Activated B cell treated with CpG ODN at 0.5 μM for 24 hours (primary cell): ENCODE measurements at regions of chr3 and their contacts with region 1.

Region 1: GRCh38 chr3:58305882-58306711 is at the starts of genes HTD2 and RPP14:
- DNase-seq: peak; percentile 97
- ATAC-seq: peak; percentile 88
- H3K4me3 Mint-ChIP-seq: peak within 1 kb of the TSS; percentile 98
- H3K27ac Mint-ChIP-seq: peak within 1 kb of the TSS; percentile 99
- H3K4me1 Mint-ChIP-seq: peaks cover 29% of the 10 kb centered on the region
- H3K27me3 Mint-ChIP-seq: peaks cover 3% of the 10 kb centered on the region
- CTCF ChIP-seq: no peak
- total RNA-seq, gene HTD2: 11.4 TPM in 2 replicates
- total RNA-seq, gene RPP14: 17.5 and 17.7 TPM in 2 replicates

Region 2: GRCh38 chr3:57755668-57756527 is 550.2 kb before region 1 on chr3 and contains the start of gene SLMAP:
- CTCF ChIA-PET with region 1: no interaction called
- POLR2A ChIA-PET with region 1: no interaction called
- intact Hi-C with region 1: loop called (anchors 5 kb)
- DNase-seq: peak; percentile 87
- ATAC-seq: peak; percentile 94
- H3K4me3 Mint-ChIP-seq: peak within 1 kb of the TSS; percentile 95
- H3K27ac Mint-ChIP-seq: peak within 1 kb of the TSS; percentile 94
- H3K4me1 Mint-ChIP-seq: peaks cover 39% of the 10 kb centered on the region
- H3K27me3 Mint-ChIP-seq: no peaks in the 10 kb centered on the region
- CTCF ChIP-seq: no peak
- total RNA-seq, gene SLMAP: 45.4 and 57.1 TPM in 2 replicates

Region 3: GRCh38 chr3:58188173-58188564 is 117.9 kb before region 1 on chr3:
- CTCF ChIA-PET with region 1: interaction called, 167 read pairs
- POLR2A ChIA-PET with region 1: interaction called, 23 read pairs
- intact Hi-C with region 1: no loop called
- DNase-seq: no peak
- ATAC-seq: peak; percentile 18
- H3K4me3 Mint-ChIP-seq: no peak overlapping the region
- H3K27ac Mint-ChIP-seq: peak overlapping the region; percentile 61
- H3K4me1 Mint-ChIP-seq: peaks cover 7% of the 10 kb centered on the region
- H3K27me3 Mint-ChIP-seq: no peaks in the 10 kb centered on the region
- CTCF ChIP-seq: no peak

Region 4: DNA sequence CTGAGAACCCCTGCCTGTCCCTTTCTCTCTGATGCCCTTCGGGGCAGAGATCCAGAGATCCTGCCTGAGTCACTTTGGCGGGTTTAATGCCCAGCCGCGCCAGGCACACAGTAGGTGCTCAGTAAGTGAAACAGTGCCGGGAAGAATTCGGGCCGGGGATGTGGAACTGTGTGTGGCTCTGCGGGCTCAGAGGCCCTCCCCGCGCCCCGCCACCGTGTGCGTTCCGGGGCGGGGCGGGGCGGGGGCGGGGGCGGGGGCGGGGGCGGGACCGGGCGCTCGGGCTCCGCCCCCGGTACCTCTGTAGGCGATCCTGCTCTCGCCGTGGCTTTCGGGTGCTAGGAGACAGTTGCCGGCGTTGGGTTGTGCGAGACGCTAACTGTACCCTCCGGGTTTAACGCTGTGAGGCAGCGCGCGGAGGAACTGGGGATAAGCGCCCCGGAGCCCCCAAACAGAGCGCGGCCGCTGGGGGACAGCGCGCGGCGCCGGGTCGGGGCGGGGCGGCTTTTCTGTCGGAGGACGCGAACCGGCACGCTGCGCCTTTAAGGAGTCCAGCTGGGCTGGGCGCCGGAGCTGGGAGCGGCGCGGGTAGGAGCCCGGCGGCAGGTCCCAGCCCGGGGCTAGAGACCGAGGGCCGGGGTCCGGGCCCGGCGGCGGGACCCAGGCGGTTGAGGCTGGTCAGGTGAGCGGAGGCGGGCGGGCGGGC is 68.7 kb before region 1 on chr3 and contains the start of gene ABHD6:
- CTCF ChIA-PET with region 1: interaction called, 8 read pairs
- POLR2A ChIA-PET with region 1: interaction called, 26 read pairs
- intact Hi-C with region 1: loop called (anchors 1 kb)
- DNase-seq: peak; percentile 86
- ATAC-seq: peak; percentile 67
- H3K4me3 Mint-ChIP-seq: peak within 1 kb of the TSS; percentile 91
- H3K27ac Mint-ChIP-seq: peak within 1 kb of the TSS; percentile 90
- H3K4me1 Mint-ChIP-seq: peaks cover 74% of the 10 kb centered on the region
- H3K27me3 Mint-ChIP-seq: no peaks in the 10 kb centered on the region
- CTCF ChIP-seq: no peak
- total RNA-seq, gene ABHD6: 37.1 and 48.7 TPM in 2 replicates

Region 5: DNA sequence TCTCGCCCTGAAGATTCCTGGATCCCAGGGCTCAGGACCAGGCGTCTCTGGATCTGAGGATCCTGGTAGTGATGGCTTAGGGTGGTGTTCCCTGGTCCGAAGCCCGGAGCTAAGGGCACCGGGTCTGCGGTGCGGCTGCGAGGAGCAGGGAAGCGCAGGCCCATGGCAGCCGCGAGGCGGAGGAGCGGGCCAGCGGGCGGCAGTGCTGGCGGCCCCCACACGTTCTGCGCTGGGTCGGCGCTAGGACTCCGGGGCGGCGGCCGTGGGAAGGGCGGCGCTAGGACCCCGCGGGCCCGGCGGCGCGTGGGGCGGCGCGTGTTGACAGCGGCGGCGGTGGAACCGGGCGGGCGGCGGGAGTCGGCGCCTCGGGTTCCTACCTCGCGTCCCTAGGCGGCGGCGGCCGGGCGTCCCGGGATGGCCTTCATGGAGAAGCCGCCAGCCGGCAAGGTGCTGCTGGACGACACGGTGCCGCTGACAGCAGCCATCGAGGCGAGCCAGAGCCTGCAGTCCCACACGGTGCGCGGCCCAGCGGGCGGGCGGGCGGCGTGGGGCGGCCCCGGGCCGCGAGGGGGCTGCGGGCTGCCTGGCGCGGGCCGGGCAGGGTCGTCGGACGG is 26.6 kb after region 1 on chr3 and contains the start of gene PXK:
- CTCF ChIA-PET with region 1: interaction called, 11 read pairs
- POLR2A ChIA-PET with region 1: interaction called, 13 read pairs
- intact Hi-C with region 1: loop called (anchors 1 kb)
- DNase-seq: peak; percentile 84
- ATAC-seq: peak; percentile 74
- H3K4me3 Mint-ChIP-seq: peak within 1 kb of the TSS; percentile 100
- H3K27ac Mint-ChIP-seq: peak within 1 kb of the TSS; percentile 99
- H3K4me1 Mint-ChIP-seq: peaks cover 49% of the 10 kb centered on the region
- H3K27me3 Mint-ChIP-seq: no peaks in the 10 kb centered on the region
- CTCF ChIP-seq: no peak
- total RNA-seq, gene PXK: 70.3 and 81.3 TPM in 2 replicates

Region 6: GRCh38 chr3:58491506-58492402 is 185.7 kb after region 1 on chr3 and contains the start of gene KCTD6:
- CTCF ChIA-PET with region 1: interaction called, 32 read pairs
- POLR2A ChIA-PET with region 1: interaction called, 21 read pairs
- intact Hi-C with region 1: loop called (anchors 1 kb)
- DNase-seq: peak; percentile 95
- ATAC-seq: peak; percentile 94
- H3K4me3 Mint-ChIP-seq: peak within 1 kb of the TSS; percentile 88
- H3K27ac Mint-ChIP-seq: peak within 1 kb of the TSS; percentile 74
- H3K4me1 Mint-ChIP-seq: peaks cover 46% of the 10 kb centered on the region
- H3K27me3 Mint-ChIP-seq: peaks cover 5% of the 10 kb centered on the region
- CTCF ChIP-seq: no peak
- total RNA-seq, gene KCTD6: 8.8 and 10.0 TPM in 2 replicates

Region 7: DNA sequence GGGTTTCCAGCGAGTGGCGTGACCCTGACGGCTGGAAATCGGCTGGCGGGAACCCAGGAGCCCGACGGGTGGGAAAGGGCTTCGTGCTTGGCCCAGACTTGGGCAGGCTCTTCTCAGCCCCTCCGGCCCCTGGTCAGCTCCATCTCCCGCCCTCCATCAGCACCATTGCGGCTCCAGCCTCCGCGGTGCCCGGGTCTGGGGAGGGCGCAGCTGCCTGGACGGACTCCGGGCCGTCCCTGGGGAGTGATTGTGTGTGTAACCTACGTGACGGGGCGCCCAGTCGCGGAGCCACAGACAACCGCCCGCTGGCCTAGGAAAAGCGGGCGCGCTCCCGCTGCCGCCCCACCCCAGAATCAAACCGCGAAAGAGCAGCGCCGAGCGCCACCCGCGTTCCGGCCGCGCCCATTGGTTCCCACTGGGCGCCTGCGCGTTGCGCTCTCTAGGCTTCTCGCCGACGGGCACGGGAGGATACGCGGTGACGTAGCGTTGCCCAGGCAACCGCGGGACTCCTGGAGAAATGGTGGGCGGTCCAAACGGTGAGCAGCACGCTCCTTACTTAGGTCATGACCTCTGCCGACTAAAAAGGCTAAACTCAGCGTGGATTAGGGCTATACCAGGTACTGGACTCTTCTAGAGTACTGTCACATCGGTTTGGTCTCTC is 743.7 kb after region 1 on chr3 and contains the start of gene CFAP20DC:
- CTCF ChIA-PET with region 1: interaction called, 3 read pairs
- POLR2A ChIA-PET with region 1: no interaction called
- intact Hi-C with region 1: loop called (anchors 5 kb)
- DNase-seq: peak; percentile 85
- ATAC-seq: peak; percentile 96
- H3K4me3 Mint-ChIP-seq: peak within 1 kb of the TSS; percentile 81
- H3K27ac Mint-ChIP-seq: peak within 1 kb of the TSS; percentile 61
- H3K4me1 Mint-ChIP-seq: peaks cover 7% of the 10 kb centered on the region
- H3K27me3 Mint-ChIP-seq: no peaks in the 10 kb centered on the region
- CTCF ChIP-seq: no peak
- total RNA-seq, gene CFAP20DC: 1.0 and 1.6 TPM in 2 replicates